HEK293T (cell line): ENCODE measurements at regions of chr6 and their contacts with region 1.

Region 1: DNA sequence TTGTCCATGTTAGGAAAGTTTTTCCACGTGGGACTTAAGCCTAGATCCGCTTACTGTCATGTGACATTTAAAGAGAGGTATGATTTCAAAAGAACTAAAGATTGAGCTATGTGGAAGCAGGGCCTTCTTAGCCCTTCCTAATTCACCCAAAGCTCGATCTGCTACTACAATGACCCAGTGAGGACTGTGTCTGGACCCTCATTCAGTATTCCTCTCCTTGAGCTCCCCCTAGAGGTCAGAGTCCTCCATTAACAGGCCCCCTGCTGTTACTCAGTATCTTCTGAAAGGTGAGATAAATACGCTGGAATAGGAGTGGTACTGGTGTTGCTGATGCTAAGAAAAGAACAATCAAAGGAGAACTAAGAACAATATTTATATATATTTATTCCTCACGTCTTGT is 414.0 kb downstream of the GJA1 start:
- DNase-seq: peak; percentile 80

Region 2: DNA sequence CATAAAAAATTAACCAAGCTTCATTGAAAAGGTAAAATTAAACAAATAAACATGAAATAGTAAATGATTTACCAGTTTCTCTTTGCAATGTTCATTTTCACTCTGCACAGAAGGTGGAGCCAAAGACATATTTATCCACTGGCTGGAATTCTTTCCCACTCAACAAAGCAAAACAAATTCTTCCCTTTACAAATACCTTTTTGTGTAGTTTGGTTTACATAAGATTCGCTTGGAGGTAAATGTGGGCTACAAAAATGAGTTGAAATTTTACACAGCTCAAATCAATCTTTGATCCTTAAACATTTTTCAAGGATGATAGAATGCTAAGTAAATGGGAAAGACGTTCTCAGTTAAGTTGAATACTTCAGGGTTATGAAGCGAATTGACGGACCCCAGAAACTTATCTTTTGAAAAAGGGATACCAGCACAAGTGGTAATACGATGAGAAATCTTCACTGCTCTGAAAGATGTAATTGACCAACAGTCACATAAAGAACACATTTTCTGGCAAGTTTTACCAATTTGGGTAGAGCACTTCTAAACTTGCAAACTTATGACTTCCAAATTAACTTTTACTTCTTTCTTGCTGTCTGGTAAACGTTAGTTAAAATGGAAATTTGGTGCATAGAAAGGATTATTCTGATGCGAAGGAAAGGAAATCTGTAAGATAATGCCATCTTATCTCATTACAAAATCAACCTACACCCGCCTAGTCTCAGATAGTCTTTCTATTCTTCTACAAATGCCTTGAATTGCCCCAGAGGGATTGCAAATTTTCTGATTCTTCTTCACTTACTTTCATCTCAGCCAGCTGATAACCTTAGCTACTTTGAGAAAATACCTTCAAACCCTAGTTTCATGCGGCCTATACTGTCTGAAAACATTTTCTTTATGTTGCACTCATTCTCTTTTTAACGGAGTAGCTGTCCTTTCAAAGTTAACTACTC is 418.7 kb before region 1 on chr6:
- CTCF ChIA-PET with region 1: interaction called, 21 read pairs
- POLR2A ChIA-PET with region 1: interaction called, 14 read pairs
- DNase-seq: no peak

Region 3: DNA sequence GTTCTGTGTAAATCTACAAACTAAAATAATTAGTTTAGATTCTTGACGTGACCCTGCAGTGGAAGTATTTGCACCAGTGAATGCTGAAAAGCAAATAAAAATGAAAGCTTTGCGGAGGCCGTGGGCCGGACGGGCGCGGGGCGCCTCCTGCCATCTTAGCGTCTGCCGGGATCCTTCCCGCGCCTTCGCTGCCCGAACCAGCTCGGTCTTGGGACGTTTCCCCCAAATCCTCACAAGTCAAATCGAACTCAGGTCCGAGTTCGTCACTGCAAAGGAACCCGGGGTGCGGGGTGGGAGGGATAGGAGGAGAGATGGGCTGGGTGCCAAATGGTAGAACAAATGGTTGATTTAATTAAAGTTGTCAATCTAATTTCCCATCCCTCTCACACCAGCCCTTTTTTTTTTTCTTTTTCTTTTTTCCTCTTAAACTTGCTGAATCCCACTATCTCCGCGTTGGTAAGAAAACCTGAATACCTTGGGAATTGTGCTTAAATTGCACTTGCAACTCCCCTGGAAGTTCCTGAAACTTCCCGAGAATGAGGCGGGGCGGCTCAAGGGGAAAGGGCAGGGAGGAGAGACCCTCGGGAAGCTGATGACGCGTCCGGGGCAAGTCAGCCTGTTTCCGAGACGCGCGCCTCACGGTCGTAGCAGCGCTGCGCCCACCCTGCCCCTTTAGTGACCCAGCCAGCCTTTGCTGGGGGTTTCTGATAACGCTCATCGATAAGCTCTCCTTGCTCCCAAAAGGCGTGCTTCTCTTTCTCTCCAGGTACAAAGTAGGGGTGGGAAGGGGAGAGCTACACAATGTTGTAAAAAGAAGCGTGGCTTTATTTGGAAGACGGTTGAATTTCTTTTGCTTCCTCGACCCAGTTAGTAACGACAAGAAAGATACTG is 412.3 kb before region 1 on chr6:
- CTCF ChIA-PET with region 1: interaction called, 21 read pairs
- POLR2A ChIA-PET with region 1: interaction called, 14 read pairs
- DNase-seq: peak; percentile 56

Region 4: GRCh38 chr6:121876721-121877120 is 27.2 kb after region 1 on chr6:
- CTCF ChIA-PET with region 1: no interaction called
- POLR2A ChIA-PET with region 1: no interaction called
- DNase-seq: no peak